H1 (cell line): ENCODE measurements at regions of chr1 and their contacts with region 1.

Region 1: GRCh38 chr1:45583264-45583665 is 576 bp upstream of the NASP start:
- DNase-seq: peak; percentile 90
- H3K4me3 ChIP-seq: peak overlapping the region; percentile 82 to 100 (median 94)
- H3K27ac ChIP-seq: peak overlapping the region; percentile 98; the same call in 1 of the 2 replicates
- H3K4me1 ChIP-seq: peaks cover 0 to 9% (median 1%) of the 10 kb centered on the region in 4 experiments; a peak in 4 of 7 replicates
- H3K27me3 ChIP-seq: no peaks in the 10 kb centered on the region
- CTCF ChIP-seq: no peak
- EP300 ChIP-seq: no peak
- POLR2A ChIP-seq: no peak
- RAD21 ChIP-seq: no peak

Region 2: GRCh38 chr1:45512641-45513054 is 70.6 kb before region 1 on chr1:
- CTCF ChIA-PET with region 1: interaction called, 7 read pairs
- POLR2A ChIA-PET with region 1: interaction called, 33 read pairs
- DNase-seq: peak in 1 of 2 experiments; percentile 68
- H3K4me3 ChIP-seq: no peak overlapping the region
- H3K27ac ChIP-seq: no peak overlapping the region
- H3K4me1 ChIP-seq: no peaks in the 10 kb centered on the region
- H3K27me3 ChIP-seq: no peaks in the 10 kb centered on the region
- CTCF ChIP-seq: peak; percentile 75 to 86 (median 80)
- EP300 ChIP-seq: no peak
- POLR2A ChIP-seq: 0 out of 3 replicates have a peak, but pooled peaks of 1 of the 2 experiments have one; percentile 22
- RAD21 ChIP-seq: peak; percentile 70 to 72

Region 3: DNA sequence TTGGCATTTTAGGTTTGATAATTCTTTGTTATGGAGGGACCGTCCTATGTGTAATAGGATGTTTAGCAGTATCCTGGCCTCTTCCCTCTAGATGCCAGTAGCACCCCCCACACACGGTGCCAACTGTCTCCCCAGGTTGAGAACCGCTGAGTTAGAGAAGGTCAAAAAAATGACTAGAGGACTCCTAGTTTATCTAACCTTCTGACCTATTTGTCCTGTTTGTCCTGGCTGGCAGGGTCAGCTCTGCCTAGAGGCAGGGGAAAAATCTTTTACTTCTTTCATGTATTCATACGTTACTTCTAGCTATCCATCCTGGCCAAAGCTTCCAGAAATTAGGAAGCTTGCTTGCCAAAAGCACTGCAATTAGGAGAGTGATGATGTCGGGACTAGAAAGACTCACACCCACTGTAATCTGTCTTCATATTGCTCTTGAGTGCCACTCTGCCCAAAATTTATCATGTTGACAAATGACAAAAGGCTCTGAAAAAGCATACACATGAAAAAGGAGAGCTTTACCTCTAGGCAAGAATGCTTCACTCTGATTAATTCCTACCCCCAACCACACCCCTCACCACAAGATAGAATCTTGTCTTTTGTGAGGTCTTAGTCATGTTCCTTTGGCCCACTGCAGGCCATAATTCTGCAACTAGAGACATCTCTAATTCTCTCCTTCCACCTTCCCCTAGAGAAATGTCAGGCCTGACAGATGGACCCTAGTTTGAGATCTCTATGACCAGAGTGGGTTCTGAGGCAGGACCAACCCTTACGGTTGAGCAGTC is 47.1 kb before region 1 on chr1:
- CTCF ChIA-PET with region 1: no interaction called
- POLR2A ChIA-PET with region 1: interaction called, 12 read pairs
- DNase-seq: no peak
- H3K4me3 ChIP-seq: no peak overlapping the region
- H3K27ac ChIP-seq: no peak overlapping the region
- H3K4me1 ChIP-seq: no peaks in the 10 kb centered on the region
- H3K27me3 ChIP-seq: no peaks in the 10 kb centered on the region
- CTCF ChIP-seq: no peak
- EP300 ChIP-seq: no peak
- POLR2A ChIP-seq: no peak
- RAD21 ChIP-seq: no peak

Region 4: DNA sequence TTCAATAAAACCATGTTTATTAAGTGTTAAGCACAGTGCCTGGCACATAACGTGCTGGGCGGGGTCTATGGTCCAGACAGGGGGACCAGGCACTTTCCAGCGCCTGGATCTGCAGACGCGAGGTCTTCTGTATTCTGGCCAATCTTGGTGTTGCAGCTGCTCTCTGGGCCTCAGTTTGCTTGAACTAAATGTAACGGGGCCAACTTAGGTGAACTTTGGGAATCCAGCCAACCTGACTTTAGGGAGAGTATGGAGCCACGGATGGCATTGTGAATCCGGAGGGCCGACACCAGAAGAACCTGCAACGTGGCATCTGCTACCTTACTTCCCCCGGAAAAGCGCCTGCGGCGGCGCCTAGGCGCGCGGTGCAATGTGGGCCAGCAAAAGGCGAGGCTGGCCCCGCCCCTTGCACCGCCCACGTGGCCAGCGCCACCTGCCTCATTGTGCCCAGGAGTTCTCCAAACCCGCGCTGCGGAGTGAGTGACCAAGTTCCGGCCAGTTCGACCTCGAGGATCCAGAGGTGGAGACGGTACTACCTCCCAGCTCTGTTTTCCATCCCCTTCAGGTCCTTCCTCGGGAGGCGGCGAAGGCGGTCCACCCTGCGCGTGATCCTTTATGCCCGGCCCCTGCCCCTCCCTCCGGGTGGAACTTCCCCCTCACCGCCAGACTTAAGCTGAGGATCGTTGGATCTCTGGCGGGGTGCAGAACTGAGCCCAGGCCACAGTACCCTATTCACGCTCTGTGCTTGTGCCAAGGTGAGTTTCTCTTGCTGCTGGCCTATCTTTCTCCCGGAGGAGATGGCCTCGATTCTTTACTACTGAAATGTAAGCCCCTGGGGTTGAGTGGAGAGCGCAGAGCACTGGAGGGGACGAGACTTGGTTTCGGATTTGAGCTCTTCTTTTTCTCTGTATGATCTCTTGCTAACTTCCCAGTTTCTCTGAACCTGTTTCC is 32.6 kb before region 1 on chr1 and contains the start of gene AKR1A1:
- CTCF ChIA-PET with region 1: no interaction called
- POLR2A ChIA-PET with region 1: interaction called, 47 read pairs
- DNase-seq: peak; percentile 78 to 93
- H3K4me3 ChIP-seq: peak within 1 kb of the TSS; percentile 82 to 95 (median 90)
- H3K27ac ChIP-seq: peak within 1 kb of the TSS; percentile 88
- H3K4me1 ChIP-seq: peaks cover 0 to 4% (median 1%) of the 10 kb centered on the region in 4 experiments; a peak in 3 of 7 replicates
- H3K27me3 ChIP-seq: no peaks in the 10 kb centered on the region
- CTCF ChIP-seq: no peak; a peak in 1 of 4 replicates
- EP300 ChIP-seq: peak in 1 of 2 experiments; percentile 10; a peak in 1 of 3 replicates
- POLR2A ChIP-seq: peak; percentile 90 to 99
- RAD21 ChIP-seq: no peak
- total RNA-seq, gene AKR1A1: 334 and 344 TPM in 2 replicates

Region 5: GRCh38 chr1:45608175-45609156 is 25.2 kb after region 1 on chr1:
- CTCF ChIA-PET with region 1: interaction called, 3 read pairs
- POLR2A ChIA-PET with region 1: interaction called, 90 read pairs
- DNase-seq: no peak
- H3K4me3 ChIP-seq: no peak overlapping the region
- H3K27ac ChIP-seq: no peak overlapping the region
- H3K4me1 ChIP-seq: no peaks in the 10 kb centered on the region
- H3K27me3 ChIP-seq: no peaks in the 10 kb centered on the region
- CTCF ChIP-seq: no peak
- EP300 ChIP-seq: no peak
- POLR2A ChIP-seq: no peak; a peak in 1 of 3 replicates
- RAD21 ChIP-seq: no peak

Region 6: GRCh38 chr1:45686317-45687013 is 103.2 kb after region 1 on chr1 and contains the start of gene GPBP1L1:
- CTCF ChIA-PET with region 1: no interaction called
- POLR2A ChIA-PET with region 1: interaction called, 20 read pairs
- DNase-seq: peak; percentile 93 to 98
- H3K4me3 ChIP-seq: peak within 1 kb of the TSS; percentile 96 to 99 (median 98)
- H3K27ac ChIP-seq: peak within 1 kb of the TSS; percentile 93
- H3K4me1 ChIP-seq: peaks cover 0 to 5% (median under 1%) of the 10 kb centered on the region in 4 experiments; a peak in 5 of 7 replicates
- H3K27me3 ChIP-seq: no peaks in the 10 kb centered on the region
- CTCF ChIP-seq: no peak
- EP300 ChIP-seq: no peak
- POLR2A ChIP-seq: peak; percentile 59 to 97
- RAD21 ChIP-seq: no peak
- total RNA-seq, gene GPBP1L1: 119 and 126 TPM in 2 replicates

Region 7: DNA sequence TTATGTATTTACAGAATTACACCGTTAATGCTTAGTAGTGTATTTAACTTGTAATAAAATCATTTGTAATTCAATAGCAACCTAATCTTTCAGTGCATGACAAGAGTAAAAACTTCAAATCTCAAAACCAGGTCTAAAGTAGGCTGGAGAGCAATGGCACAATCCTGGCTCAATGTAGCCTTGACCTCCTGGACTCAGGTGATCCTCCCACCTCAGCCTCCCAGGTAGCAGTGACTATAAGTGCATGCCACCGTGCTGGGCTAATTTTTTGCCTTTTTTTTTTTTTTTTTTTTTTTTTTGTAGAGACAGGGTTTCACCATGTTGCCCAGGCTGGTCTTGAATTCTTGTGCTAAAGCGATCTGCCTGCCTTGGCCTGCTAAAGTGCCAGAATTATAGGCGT is 155.9 kb after region 1 on chr1:
- CTCF ChIA-PET with region 1: no interaction called
- POLR2A ChIA-PET with region 1: no interaction called
- DNase-seq: no peak
- H3K4me3 ChIP-seq: no peak overlapping the region
- H3K27ac ChIP-seq: no peak overlapping the region
- H3K4me1 ChIP-seq: no peaks in the 10 kb centered on the region
- H3K27me3 ChIP-seq: no peaks in the 10 kb centered on the region
- CTCF ChIP-seq: no peak
- EP300 ChIP-seq: no peak
- POLR2A ChIP-seq: no peak
- RAD21 ChIP-seq: no peak